IMR-90 (cell line): ENCODE measurements at regions of chr17 and their contacts with region 1.

Region 1: GRCh38 chr17:83012868-83013778 is 66.3 kb upstream of the METRNL start:
- DNase-seq: peak; percentile 97
- ATAC-seq: peak; percentile 91
- H3K4me3 ChIP-seq: no peak overlapping the region
- H3K27ac ChIP-seq: peak overlapping the region; percentile 53; the same call in 1 of the 2 replicates
- H3K4me1 ChIP-seq: peaks cover 16% of the 10 kb centered on the region
- H3K27me3 ChIP-seq: no peaks in the 10 kb centered on the region
- CTCF ChIP-seq: no peak
- POLR2A ChIP-seq: peak; percentile 60; the same call in 1 of the 2 replicates
- RAD21 ChIP-seq: peak; percentile 24; the same call in 1 of the 2 replicates

Region 2: GRCh38 chr17:82881900-82882714 is 131.0 kb before region 1 on chr17:
- CTCF ChIA-PET with region 1: no interaction called
- POLR2A ChIA-PET with region 1: interaction called, 20 read pairs
- dilution Hi-C with region 1: no loop called
- in situ Hi-C with region 1: no loop called
- intact Hi-C with region 1: no loop called
- DNase-seq: no peak
- ATAC-seq: no peak
- H3K4me3 ChIP-seq: no peak overlapping the region
- H3K27ac ChIP-seq: no peak overlapping the region
- H3K4me1 ChIP-seq: peaks cover 10% of the 10 kb centered on the region
- H3K27me3 ChIP-seq: no peaks in the 10 kb centered on the region
- CTCF ChIP-seq: no peak
- POLR2A ChIP-seq: no peak
- RAD21 ChIP-seq: no peak

Region 3: GRCh38 chr17:82932518-82933310 is 80.4 kb before region 1 on chr17:
- CTCF ChIA-PET with region 1: no interaction called
- POLR2A ChIA-PET with region 1: interaction called, 12 read pairs
- dilution Hi-C with region 1: no loop called
- in situ Hi-C with region 1: no loop called
- intact Hi-C with region 1: no loop called
- DNase-seq: peak; percentile 86
- ATAC-seq: peak; percentile 10; the same call in 1 of the 2 replicates
- H3K4me3 ChIP-seq: no peak overlapping the region
- H3K27ac ChIP-seq: peak overlapping the region; percentile 77
- H3K4me1 ChIP-seq: peaks cover 8% of the 10 kb centered on the region
- H3K27me3 ChIP-seq: no peaks in the 10 kb centered on the region
- CTCF ChIP-seq: no peak
- POLR2A ChIP-seq: no peak
- RAD21 ChIP-seq: no peak

Region 4: DNA sequence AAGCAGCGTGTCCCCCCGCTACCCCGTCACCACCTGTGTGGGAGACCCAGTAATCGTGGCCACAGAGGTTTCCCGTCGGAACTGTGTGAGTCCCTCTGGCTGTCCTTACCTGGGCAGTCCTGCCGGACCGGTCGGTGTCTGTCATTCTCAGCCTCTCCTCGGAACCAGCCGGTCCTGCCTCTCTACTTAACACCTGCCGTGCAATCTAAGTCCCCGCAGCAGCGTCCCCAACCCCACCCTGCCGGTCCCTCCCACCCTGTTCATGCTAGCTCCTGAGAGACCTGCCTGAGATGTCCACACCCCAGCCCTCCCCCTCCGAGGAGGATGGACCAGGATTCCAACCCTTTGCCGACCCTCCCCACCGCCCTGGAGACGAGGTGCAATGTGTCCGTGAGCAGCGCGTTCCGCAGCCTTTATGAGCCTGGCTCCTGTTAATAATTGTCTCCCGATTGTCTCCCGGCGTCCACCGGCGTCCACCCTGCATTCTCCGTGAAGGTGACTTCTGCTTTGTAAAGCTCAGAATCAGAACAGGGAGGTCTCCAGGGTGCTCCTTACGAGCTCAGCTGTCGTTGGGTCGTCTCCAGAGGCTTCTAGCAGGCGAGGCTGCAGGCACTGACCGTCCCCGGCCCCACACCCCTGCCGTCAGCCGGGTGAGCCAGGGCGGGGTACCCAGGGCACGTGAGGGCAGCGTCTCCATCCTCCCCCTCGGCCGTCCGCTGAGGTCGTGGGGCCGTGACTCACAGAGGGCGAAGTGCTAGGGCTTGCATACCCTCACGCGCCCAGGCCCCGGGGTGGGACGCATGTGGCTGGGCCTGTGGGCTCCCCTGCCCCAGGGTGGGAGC is 76.4 kb after region 1 on chr17:
- CTCF ChIA-PET with region 1: no interaction called
- POLR2A ChIA-PET with region 1: no interaction called
- dilution Hi-C with region 1: no loop called
- in situ Hi-C with region 1: no loop called
- intact Hi-C with region 1: no loop called
- DNase-seq: no peak
- ATAC-seq: no peak
- H3K4me3 ChIP-seq: no peak overlapping the region
- H3K27ac ChIP-seq: no peak overlapping the region
- H3K4me1 ChIP-seq: peaks cover 27% of the 10 kb centered on the region
- H3K27me3 ChIP-seq: no peaks in the 10 kb centered on the region
- CTCF ChIP-seq: no peak
- POLR2A ChIP-seq: no peak
- RAD21 ChIP-seq: no peak